ENCODE measurements at regions of chr20 and their contacts with region 1.

Region 1: GRCh38 chr20:37178839-37179670 is at the starts of genes MROH8 and RPN2:
- DNase-seq: peak; percentile 98
- ATAC-seq: peak; percentile 97
- H3K4me3 Mint-ChIP-seq: peak within 1 kb of the TSS; percentile 84
- H3K27ac Mint-ChIP-seq: peak within 1 kb of the TSS; percentile 94
- H3K4me1 Mint-ChIP-seq: peaks cover 34% of the 10 kb centered on the region
- H3K27me3 Mint-ChIP-seq: no peaks in the 10 kb centered on the region
- total RNA-seq, gene MROH8: 2.3 to 3.1 TPM
- total RNA-seq, gene RPN2: 148 to 178 TPM

Region 2: GRCh38 chr20:37095599-37096414 is 83.2 kb before region 1 on chr20 and contains the start of gene RBL1:
- CTCF ChIA-PET with region 1: interaction called, 15 read pairs
- DNase-seq: peak; percentile 94
- ATAC-seq: peak; percentile 87
- H3K4me3 Mint-ChIP-seq: peak within 1 kb of the TSS; percentile 94
- H3K27ac Mint-ChIP-seq: peak within 1 kb of the TSS; percentile 100
- H3K4me1 Mint-ChIP-seq: peaks cover 39% of the 10 kb centered on the region
- H3K27me3 Mint-ChIP-seq: no peaks in the 10 kb centered on the region
- total RNA-seq, gene RBL1: 46.2 to 67.3 TPM

Region 3: GRCh38 chr20:37192137-37192854 is 13.2 kb after region 1 on chr20:
- CTCF ChIA-PET with region 1: interaction called, 65 read pairs
- DNase-seq: peak; percentile 80
- ATAC-seq: peak; percentile 79
- H3K4me3 Mint-ChIP-seq: no peak overlapping the region
- H3K27ac Mint-ChIP-seq: peak overlapping the region; percentile 8
- H3K4me1 Mint-ChIP-seq: peaks cover 64% of the 10 kb centered on the region
- H3K27me3 Mint-ChIP-seq: no peaks in the 10 kb centered on the region

Region 4: DNA sequence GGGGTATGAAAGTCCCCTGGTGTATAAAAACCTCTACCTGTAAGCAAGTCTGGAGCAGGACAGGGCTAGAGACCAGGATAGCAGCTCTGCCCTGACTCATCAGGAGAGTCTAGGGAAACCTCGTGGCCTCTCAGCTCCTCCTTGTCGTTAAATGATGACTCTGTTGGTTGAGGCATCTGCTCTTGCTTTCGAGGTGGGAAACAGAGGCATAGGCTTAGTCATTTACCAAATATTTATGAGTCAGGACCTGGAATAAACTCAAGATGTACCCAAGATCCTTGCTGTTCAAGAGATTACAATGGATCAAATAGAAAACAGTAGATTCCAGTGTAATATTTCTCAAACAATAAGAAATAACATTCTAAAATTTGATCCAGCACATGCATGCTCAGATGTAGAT is 115.9 kb after region 1 on chr20:
- CTCF ChIA-PET with region 1: no interaction called
- DNase-seq: no peak
- ATAC-seq: peak; percentile 51
- H3K4me3 Mint-ChIP-seq: no peak overlapping the region
- H3K27ac Mint-ChIP-seq: no peak overlapping the region
- H3K4me1 Mint-ChIP-seq: peaks cover 50% of the 10 kb centered on the region
- H3K27me3 Mint-ChIP-seq: no peaks in the 10 kb centered on the region

Measured in activated CD8-positive, alpha-beta memory T cell treated with anti-CD3 and anti-CD28 coated beads, Interleukin-2, amount 10 ng/mL, durations not matched to agents 7 days and 5 days (primary cell).